Activated T-helper 2 cell treated with anti-CD3 and anti-CD28 coated beads, Interferon-gamma antibody, Interleukin-2, Interleukin-4, amounts not matched to agents 10 μg/mL and 5 μg/mL and 100 μg/mL, durations not matched to agents 14 hours and 24 hours and 36 hours (primary cell): ENCODE measurements at regions of chr1 and their contacts with region 1.

Region 1: DNA sequence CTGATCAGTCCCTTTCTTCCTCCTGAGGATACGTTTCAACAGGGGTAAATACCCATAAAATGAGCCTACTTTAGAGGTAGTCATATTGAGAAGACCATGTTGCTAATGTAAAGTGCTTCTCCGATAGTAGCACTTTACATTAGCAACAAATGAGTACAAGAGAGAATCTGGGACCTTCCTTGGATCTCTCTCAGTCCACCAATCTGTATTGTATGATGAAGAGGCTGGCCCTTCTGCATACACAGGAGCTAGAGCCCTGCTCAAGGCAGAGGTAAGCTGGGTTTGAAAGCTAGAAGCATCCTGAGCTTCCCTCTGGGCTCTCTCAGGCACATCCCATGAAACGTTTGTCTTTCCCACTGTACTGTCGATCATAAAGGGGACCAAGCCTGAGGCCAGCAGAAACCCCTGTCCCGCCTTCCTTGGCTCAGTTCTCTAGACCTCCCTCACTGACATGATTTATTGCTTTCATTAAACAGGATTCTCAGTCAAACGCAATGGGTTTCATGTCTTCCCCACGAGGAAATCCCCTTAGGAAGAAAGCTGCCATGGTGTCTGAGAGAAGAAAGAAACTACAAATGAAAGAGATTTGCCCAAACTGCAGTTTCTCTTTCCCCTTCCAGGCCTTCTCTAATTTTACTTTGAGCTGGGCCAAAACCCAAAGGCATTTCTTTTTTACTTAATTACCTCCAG is 62.8 kb upstream of the BCAR3 start:
- DNase-seq: no peak
- H3K4me3 Mint-ChIP-seq: no peak overlapping the region
- H3K27ac Mint-ChIP-seq: no peak overlapping the region
- H3K4me1 Mint-ChIP-seq: peaks cover 15% of the 10 kb centered on the region
- H3K27me3 Mint-ChIP-seq: no peaks in the 10 kb centered on the region

Region 2: DNA sequence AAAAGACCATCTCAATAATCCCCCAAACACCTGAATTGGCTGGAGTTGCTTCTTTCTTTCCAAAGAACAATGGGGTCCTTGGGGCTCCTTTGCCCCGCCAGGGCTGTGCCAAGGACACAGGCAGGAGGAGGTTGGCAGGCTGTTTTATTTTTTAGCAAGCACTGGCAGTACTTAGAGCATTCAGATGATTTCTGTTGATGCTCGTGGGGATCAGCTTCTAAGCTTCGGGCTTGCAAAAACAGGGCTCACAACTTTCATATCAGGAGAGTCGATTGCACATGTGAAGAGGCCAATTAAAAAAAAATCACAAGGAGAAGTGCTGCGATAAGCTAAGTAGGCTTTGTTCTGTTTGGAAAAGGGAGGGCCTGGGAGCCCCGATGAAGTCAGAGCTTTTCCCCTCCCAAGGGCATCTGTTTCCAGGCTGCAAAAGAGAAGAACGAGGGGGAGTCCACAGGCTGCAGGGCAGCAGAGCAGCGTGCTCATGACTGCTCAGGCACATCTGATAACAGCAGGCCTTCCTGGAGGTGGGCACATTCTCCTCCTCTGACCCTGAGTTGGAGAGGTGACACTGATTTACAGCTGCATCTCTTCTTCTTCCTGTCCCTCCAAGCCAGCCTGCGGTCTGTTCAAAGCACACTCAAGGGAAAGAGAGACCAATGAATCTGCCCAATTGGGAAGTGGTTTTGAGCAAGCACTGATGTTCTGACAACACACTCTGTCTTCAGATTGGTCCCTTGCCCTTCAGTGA is 35.5 kb before region 1 on chr1:
- intact Hi-C with region 1: loop called (anchors 2 kb)
- DNase-seq: no peak
- H3K4me3 Mint-ChIP-seq: peak overlapping the region; percentile 47
- H3K27ac Mint-ChIP-seq: peak overlapping the region; percentile 74
- H3K4me1 Mint-ChIP-seq: peaks cover 77% of the 10 kb centered on the region
- H3K27me3 Mint-ChIP-seq: no peaks in the 10 kb centered on the region